SK-N-SH (cell line): ENCODE measurements at regions of chr3 and their contacts with region 1.

Region 1: GRCh38 chr3:183178629-183179549 is 16.4 kb upstream of the LAMP3 start:
- DNase-seq: peak; percentile 81
- H3K4me3 ChIP-seq: peak overlapping the region; percentile 49 to 66
- H3K27ac ChIP-seq: no peak overlapping the region
- H3K4me1 ChIP-seq: peaks cover 0 to 15% of the 10 kb centered on the region in 2 experiments; a peak in 2 of 4 replicates
- H3K27me3 ChIP-seq: no peaks in the 10 kb centered on the region
- CTCF ChIP-seq: peak; percentile 36; the same call in 1 of the 2 replicates
- EP300 ChIP-seq: no peak
- RAD21 ChIP-seq: no peak; the same call in 1 of the 2 replicates

Region 2: GRCh38 chr3:183122257-183122932 is 56.5 kb before region 1 on chr3:
- CTCF ChIA-PET with region 1: interaction called, 33 read pairs
- POLR2A ChIA-PET with region 1: no interaction called
- DNase-seq: peak; percentile 63
- H3K4me3 ChIP-seq: no peak overlapping the region; a peak in 1 of 4 replicates
- H3K27ac ChIP-seq: peak overlapping the region in 1 of 2 experiments; percentile 14; a peak in 2 of 4 replicates
- H3K4me1 ChIP-seq: peaks cover 0 to 7% of the 10 kb centered on the region in 2 experiments; a peak in 1 of 4 replicates
- H3K27me3 ChIP-seq: peaks cover 3% of the 10 kb centered on the region; the same call in 1 of the 2 replicates
- CTCF ChIP-seq: peak; percentile 97
- EP300 ChIP-seq: no peak
- RAD21 ChIP-seq: peak; percentile 92

Region 3: DNA sequence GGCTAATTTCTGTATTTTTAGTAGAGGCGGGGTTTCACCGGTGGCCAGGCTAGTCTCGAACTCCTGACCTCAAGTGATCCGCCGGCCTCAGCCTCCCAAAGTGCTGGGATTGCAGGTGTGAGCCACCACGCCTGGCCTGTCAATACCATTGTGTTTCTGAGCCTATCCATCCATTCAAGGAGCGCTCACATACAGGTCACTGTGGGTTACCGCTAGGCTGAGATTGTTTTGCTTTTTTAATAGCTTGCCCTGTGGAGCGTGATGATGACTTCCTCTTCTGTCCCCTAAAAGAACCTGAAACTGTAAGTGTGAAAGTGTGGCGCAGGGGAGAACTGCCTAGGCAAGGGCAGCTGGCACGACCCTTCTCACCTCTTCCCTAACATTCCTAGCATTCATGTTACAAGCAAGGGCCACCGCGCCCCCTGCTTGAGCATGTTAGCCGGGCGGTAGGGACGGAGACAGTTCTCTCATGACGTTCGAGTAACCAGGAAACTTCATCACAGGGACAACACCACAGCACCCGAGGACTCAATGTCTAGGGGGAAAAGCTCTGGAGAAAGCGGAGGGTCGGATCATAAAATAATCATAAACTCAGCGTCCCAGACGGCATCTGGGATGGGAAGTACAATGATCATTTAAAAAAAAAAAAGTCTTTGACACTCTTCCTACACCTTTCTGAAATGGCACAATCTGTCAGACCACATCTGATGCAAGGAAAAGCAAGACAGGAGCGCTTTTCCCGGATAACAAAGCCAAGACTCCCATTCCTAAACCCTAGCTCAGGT is 17.1 kb before region 1 on chr3:
- CTCF ChIA-PET with region 1: interaction called, 10 read pairs
- POLR2A ChIA-PET with region 1: no interaction called
- DNase-seq: no peak
- H3K4me3 ChIP-seq: no peak overlapping the region
- H3K27ac ChIP-seq: no peak overlapping the region
- H3K4me1 ChIP-seq: peaks cover 0 to 3% of the 10 kb centered on the region in 2 experiments; a peak in 1 of 4 replicates
- H3K27me3 ChIP-seq: no peaks in the 10 kb centered on the region
- CTCF ChIP-seq: no peak
- EP300 ChIP-seq: no peak
- RAD21 ChIP-seq: no peak